ENCODE measurements at regions of chr7 and their contacts with region 1.

Region 1: DNA sequence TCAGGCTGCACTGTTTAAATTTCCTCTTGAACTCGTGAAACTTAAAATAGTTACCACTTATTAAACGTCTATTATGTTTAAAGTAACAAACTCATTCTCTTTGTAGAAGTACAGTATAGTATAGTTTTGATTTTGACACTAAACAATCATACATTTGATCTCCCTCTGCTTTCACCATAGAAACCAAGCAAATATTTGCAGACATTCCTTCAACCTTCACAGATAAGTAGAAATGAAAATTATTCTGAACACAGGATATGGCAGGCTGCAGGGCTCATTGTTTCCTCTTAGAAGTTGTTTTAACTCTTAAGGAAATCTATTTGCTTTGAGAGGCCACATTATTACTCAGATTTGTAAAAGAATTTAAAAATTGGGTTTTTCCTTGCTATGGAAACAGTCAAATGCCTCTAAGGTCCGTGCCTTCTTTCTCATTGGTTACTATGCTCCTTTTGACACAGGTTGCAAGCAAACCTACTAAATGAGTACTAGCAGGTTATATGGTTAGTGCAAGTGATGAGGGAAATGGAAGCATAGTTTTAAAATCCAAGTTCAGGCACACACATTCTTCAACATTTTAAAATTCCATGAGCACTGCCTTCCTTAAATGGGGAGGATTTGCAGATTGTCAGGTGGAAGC is 92.8 kb upstream of the FAM133B start:
- DNase-seq: no peak
- H3K4me3 ChIP-seq: no peak overlapping the region
- H3K27ac ChIP-seq: peak overlapping the region in 6 of 59 donors; percentile 2 to 67 (median 12)
- H3K27me3 ChIP-seq: no peaks in the 10 kb centered on the region
- CTCF ChIP-seq: no peak

Region 2: DNA sequence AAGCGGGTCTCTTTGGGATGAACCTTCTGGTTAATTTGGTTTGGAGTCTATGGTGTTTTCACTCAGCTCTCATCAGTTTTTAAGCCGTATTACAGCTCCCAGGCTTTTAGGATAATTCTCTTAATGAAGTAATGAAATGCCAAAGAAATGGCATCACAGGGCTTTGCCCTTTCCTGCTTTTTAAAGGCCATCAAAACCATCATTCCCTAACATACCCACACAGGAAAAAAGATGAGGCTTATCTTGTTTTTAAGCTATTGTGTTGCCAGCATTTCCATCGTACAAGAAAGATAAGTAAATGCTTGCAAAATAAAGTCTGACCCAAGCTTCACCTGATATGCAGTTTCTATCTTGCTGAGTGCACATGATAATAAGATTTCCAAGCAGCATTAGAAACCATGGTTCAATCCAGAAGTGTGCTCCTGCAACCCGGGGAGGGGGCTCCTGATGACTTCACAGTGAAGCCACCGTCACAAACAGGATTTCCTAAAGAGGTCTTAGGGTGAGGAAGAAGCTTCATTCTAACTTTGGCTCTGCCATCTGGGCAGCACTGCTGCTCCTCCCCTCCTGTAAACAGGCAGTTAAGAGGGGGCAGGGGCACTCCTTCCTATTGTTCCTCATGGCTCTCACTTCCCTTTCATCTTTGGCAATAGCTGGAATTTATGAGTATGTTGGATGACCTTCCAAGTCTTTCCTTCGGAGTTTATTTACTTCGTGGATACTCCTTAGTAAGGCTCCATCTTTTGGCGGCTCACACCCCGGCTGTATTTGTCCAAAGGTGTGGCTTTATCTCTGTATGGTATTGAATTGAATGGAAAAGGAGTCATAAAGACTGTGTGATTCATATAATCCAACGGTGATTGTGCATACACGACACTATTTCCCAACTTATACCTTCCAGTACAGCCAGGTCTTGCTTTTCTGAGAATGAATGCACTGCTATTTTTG is 37.6 kb before region 1 on chr7:
- intact Hi-C with region 1: loop called in 1 of 2 experiments (anchors 5 kb)
- DNase-seq: no peak
- H3K4me3 ChIP-seq: no peak overlapping the region
- H3K27ac ChIP-seq: peak overlapping the region in 57 of 59 donors; percentile 16 to 91 (median 79)
- H3K27me3 ChIP-seq: no peaks in the 10 kb centered on the region
- CTCF ChIP-seq: no peak

Region 3: DNA sequence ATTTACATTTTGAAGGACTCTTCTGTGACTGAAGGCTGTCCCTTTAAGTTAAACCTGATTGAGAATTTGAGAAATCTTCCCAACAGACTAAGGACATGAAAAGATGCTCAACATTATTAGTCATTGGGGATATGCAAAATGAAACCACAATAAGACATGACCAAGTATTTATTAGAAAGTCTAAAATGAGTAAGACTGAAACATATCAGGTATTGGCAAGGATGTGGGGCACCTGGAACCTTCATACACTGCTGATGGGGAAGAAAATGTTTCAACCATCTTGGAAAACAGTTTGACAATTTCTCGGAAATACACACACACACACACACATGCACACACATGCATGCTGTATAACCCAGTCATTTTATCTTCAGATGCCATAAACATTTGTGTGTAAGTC is 285.5 kb after region 1 on chr7:
- intact Hi-C with region 1: no loop called
- DNase-seq: no peak
- H3K4me3 ChIP-seq: no peak overlapping the region
- H3K27ac ChIP-seq: no peak overlapping the region
- H3K27me3 ChIP-seq: peaks cover 0 to 3% (median 0%) of the 10 kb centered on the region in 45 donors
- CTCF ChIP-seq: no peak